ENCODE measurements at regions of chr20 and their contacts with region 1.

Region 1: GRCh38 chr20:41095110-41095969 is 42.0 kb upstream of the PLCG1 start:
- DNase-seq: peak; percentile 67
- ATAC-seq: peak; percentile 73
- H3K4me3 ChIP-seq: no peak overlapping the region
- H3K27ac ChIP-seq: no peak overlapping the region
- H3K4me1 ChIP-seq: peaks cover 23% of the 10 kb centered on the region
- H3K27me3 ChIP-seq: no peaks in the 10 kb centered on the region
- CTCF ChIP-seq: peak; percentile 85
- POLR2A ChIP-seq: no peak
- RAD21 ChIP-seq: peak; percentile 83

Region 2: GRCh38 chr20:40970201-40970600 is 125.1 kb before region 1 on chr20:
- CTCF ChIA-PET with region 1: interaction called, 3 read pairs
- POLR2A ChIA-PET with region 1: no interaction called
- dilution Hi-C with region 1: no loop called
- in situ Hi-C with region 1: loop called (anchors 5 kb)
- intact Hi-C with region 1: loop called (anchors 1 kb)
- DNase-seq: no peak
- ATAC-seq: no peak
- H3K4me3 ChIP-seq: no peak overlapping the region
- H3K27ac ChIP-seq: no peak overlapping the region
- H3K4me1 ChIP-seq: peaks cover 2% of the 10 kb centered on the region; the same call in 1 of the 2 replicates
- H3K27me3 ChIP-seq: no peaks in the 10 kb centered on the region
- CTCF ChIP-seq: peak; percentile 23; the same call in 1 of the 2 replicates
- POLR2A ChIP-seq: no peak
- RAD21 ChIP-seq: no peak

Measured in IMR-90 (cell line).